H1 (cell line): ENCODE measurements at regions of chr11 and their contacts with region 1.

Region 1: GRCh38 chr11:35822815-35823495 is 120.9 kb upstream of the LDLRAD3 start:
- DNase-seq: no peak
- H3K4me3 ChIP-seq: no peak overlapping the region
- H3K27ac ChIP-seq: no peak overlapping the region
- H3K4me1 ChIP-seq: peaks cover 0 to 2% (median 0%) of the 10 kb centered on the region in 4 experiments; a peak in 1 of 7 replicates
- H3K27me3 ChIP-seq: peaks cover 0 to 2% (median 0%) of the 10 kb centered on the region in 4 experiments; a peak in 1 of 7 replicates
- CTCF ChIP-seq: no peak
- EP300 ChIP-seq: no peak
- POLR2A ChIP-seq: no peak
- RAD21 ChIP-seq: no peak

Region 2: GRCh38 chr11:35845860-35846259 is 22.9 kb after region 1 on chr11:
- CTCF ChIA-PET with region 1: interaction called, 18 read pairs
- POLR2A ChIA-PET with region 1: no interaction called
- DNase-seq: no peak
- H3K4me3 ChIP-seq: no peak overlapping the region
- H3K27ac ChIP-seq: no peak overlapping the region
- H3K4me1 ChIP-seq: no peaks in the 10 kb centered on the region
- H3K27me3 ChIP-seq: no peaks in the 10 kb centered on the region
- CTCF ChIP-seq: no peak
- EP300 ChIP-seq: no peak
- POLR2A ChIP-seq: no peak
- RAD21 ChIP-seq: no peak

Region 3: GRCh38 chr11:35938231-35938630 is 115.3 kb after region 1 on chr11:
- CTCF ChIA-PET with region 1: interaction called, 11 read pairs
- POLR2A ChIA-PET with region 1: no interaction called
- DNase-seq: no peak
- H3K4me3 ChIP-seq: no peak overlapping the region
- H3K27ac ChIP-seq: no peak overlapping the region
- H3K4me1 ChIP-seq: peaks cover 0 to 7% (median 5%) of the 10 kb centered on the region in 4 experiments; a peak in 3 of 7 replicates
- H3K27me3 ChIP-seq: no peaks in the 10 kb centered on the region; a peak in 1 of 7 replicates
- CTCF ChIP-seq: no peak
- EP300 ChIP-seq: no peak
- POLR2A ChIP-seq: no peak
- RAD21 ChIP-seq: no peak

Region 4: GRCh38 chr11:36030731-36031281 is 207.9 kb after region 1 on chr11:
- CTCF ChIA-PET with region 1: interaction called, 10 read pairs
- POLR2A ChIA-PET with region 1: no interaction called
- DNase-seq: no peak
- H3K4me3 ChIP-seq: no peak overlapping the region
- H3K27ac ChIP-seq: no peak overlapping the region
- H3K4me1 ChIP-seq: peaks cover 5 to 10% (median 8%) of the 10 kb centered on the region in 4 experiments
- H3K27me3 ChIP-seq: no peaks in the 10 kb centered on the region
- CTCF ChIP-seq: no peak
- EP300 ChIP-seq: no peak
- POLR2A ChIP-seq: no peak
- RAD21 ChIP-seq: no peak

Region 5: GRCh38 chr11:36091256-36091811 is 268.4 kb after region 1 on chr11:
- CTCF ChIA-PET with region 1: interaction called, 11 read pairs
- POLR2A ChIA-PET with region 1: no interaction called
- DNase-seq: no peak
- H3K4me3 ChIP-seq: no peak overlapping the region
- H3K27ac ChIP-seq: peak overlapping the region; percentile 52; the same call in 1 of the 2 replicates
- H3K4me1 ChIP-seq: peaks cover 6 to 33% (median 24%) of the 10 kb centered on the region in 4 experiments; a peak in 5 of 7 replicates
- H3K27me3 ChIP-seq: no peaks in the 10 kb centered on the region
- CTCF ChIP-seq: no peak
- EP300 ChIP-seq: no peak
- POLR2A ChIP-seq: no peak
- RAD21 ChIP-seq: no peak

Region 6: DNA sequence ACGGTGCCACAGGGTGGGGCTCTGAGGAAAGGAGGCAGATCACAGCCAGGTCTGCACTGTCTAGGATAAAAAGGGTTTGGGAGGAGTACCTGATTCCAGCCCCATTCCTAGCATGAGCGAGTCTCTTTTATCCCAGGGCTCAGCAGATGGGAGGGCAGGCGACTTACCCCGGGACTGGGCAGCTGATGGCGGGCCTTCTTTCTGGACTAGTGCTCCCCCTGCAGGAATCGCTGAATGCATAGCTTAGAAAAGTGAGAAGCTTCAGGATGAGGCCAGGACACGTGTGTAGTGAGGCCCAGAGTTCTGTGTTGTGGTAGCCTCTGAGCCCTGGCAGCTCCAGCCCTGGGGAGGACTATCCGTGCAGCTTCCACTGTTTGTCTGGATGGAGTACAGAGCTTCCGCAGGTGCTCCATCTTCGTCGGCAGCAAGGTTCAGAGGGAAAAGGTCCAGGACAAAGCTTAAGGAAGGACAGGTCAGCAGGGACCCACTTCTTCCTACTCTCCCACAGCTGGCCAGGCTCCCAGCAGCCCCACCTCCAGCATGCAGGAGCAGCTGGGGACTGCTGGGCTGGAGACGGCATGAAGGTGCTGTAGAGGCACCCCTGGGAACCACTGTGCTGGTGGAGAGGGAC is 435.9 kb after region 1 on chr11:
- CTCF ChIA-PET with region 1: interaction called, 42 read pairs
- POLR2A ChIA-PET with region 1: no interaction called
- DNase-seq: peak; percentile 36 to 73
- H3K4me3 ChIP-seq: no peak overlapping the region
- H3K27ac ChIP-seq: no peak overlapping the region
- H3K4me1 ChIP-seq: peaks cover 0 to 1% (median 0%) of the 10 kb centered on the region in 4 experiments; a peak in 1 of 7 replicates
- H3K27me3 ChIP-seq: no peaks in the 10 kb centered on the region; a peak in 2 of 7 replicates
- CTCF ChIP-seq: peak; percentile 59 to 87 (median 80)
- EP300 ChIP-seq: no peak
- POLR2A ChIP-seq: no peak
- RAD21 ChIP-seq: peak; percentile 84 to 89